ENCODE measurements at regions of chr9 and their contacts with region 1.

Region 1: GRCh38 chr9:98056269-98057137 is at the start of gene NANS:
- DNase-seq: peak; percentile 91 to 96
- H3K4me3 ChIP-seq: peak within 1 kb of the TSS; percentile 66
- H3K27ac ChIP-seq: peak within 1 kb of the TSS; percentile 67
- H3K4me1 ChIP-seq: peaks cover 21% of the 10 kb centered on the region
- H3K27me3 ChIP-seq: no peaks in the 10 kb centered on the region
- CTCF ChIP-seq: no peak
- total RNA-seq, gene NANS: 74.6 and 84.9 TPM in 2 replicates

Region 2: DNA sequence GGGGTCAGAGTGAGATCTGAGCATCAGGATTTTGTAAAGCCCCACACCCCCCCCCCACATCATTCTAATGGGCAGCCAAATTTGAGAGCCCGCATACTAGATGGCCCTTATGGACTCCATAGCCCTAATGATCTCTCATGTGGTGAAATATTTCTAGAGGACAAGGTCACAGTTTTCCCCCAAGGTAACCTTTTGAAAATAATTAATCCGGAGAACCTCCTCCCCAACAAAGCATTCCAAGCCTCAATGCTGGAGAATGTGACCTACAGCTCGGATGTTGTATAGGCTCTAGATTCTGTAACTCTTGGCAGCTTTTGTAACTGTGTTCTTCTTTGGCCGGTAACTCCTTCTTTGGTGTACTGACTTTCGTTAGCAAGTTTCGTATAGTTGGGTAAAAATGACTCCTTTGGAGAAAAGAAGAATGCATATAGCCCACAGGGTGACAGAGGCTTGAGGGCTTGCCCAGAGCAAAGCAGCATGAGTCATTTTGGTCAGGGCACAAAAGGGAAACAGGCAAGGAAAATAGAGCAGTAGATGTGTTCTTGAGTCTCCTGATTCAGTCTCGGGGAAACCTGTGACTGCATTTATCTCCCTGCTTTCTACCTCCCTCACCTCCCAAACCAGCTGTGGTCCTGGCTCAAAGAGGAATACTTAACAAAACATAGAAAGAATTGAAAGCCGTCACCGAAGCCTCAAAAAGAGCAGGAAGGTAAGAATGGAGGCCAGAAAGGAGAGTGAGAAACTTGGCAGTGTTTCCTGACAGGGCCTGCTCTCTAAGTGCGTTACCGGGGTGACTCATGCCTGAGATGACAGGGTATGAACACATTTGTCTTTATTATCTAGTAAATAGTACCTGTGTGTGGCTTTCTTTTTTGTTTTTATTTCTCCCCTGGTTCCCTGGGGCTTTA is 352.8 kb before region 1 on chr9:
- CTCF ChIA-PET with region 1: no interaction called
- POLR2A ChIA-PET with region 1: no interaction called
- intact Hi-C with region 1: loop called (anchors 10 kb)
- DNase-seq: peak; percentile 71 to 83
- H3K4me3 ChIP-seq: peak overlapping the region; percentile 46; the same call in 1 of the 2 replicates
- H3K27ac ChIP-seq: peak overlapping the region; percentile 91
- H3K4me1 ChIP-seq: peaks cover 38% of the 10 kb centered on the region
- H3K27me3 ChIP-seq: no peaks in the 10 kb centered on the region
- CTCF ChIP-seq: no peak

Region 3: GRCh38 chr9:97982683-97983588 is 73.6 kb before region 1 on chr9 and contains the start of gene ANP32B:
- CTCF ChIA-PET with region 1: interaction called, 3 read pairs
- POLR2A ChIA-PET with region 1: no interaction called
- intact Hi-C with region 1: loop called (anchors 5 kb)
- DNase-seq: peak; percentile 67 to 96
- H3K4me3 ChIP-seq: peak within 1 kb of the TSS; percentile 92
- H3K27ac ChIP-seq: peak within 1 kb of the TSS; percentile 93
- H3K4me1 ChIP-seq: peaks cover 37% of the 10 kb centered on the region
- H3K27me3 ChIP-seq: no peaks in the 10 kb centered on the region
- CTCF ChIP-seq: peak; percentile 56; the same call in 1 of the 2 replicates
- total RNA-seq, gene ANP32B: 280 and 284 TPM in 2 replicates

Region 4: GRCh38 chr9:98022447-98022846 is 34.1 kb before region 1 on chr9:
- CTCF ChIA-PET with region 1: interaction called, 10 read pairs
- POLR2A ChIA-PET with region 1: interaction called, 4 read pairs
- intact Hi-C with region 1: no loop called
- DNase-seq: no peak
- H3K4me3 ChIP-seq: no peak overlapping the region
- H3K27ac ChIP-seq: no peak overlapping the region
- H3K4me1 ChIP-seq: no peaks in the 10 kb centered on the region
- H3K27me3 ChIP-seq: no peaks in the 10 kb centered on the region
- CTCF ChIP-seq: no peak

Region 5: GRCh38 chr9:98034593-98035546 is 21.6 kb before region 1 on chr9:
- CTCF ChIA-PET with region 1: interaction called, 6 read pairs
- POLR2A ChIA-PET with region 1: interaction called, 11 read pairs
- intact Hi-C with region 1: no loop called
- DNase-seq: peak in 1 of 2 experiments; percentile 50
- H3K4me3 ChIP-seq: no peak overlapping the region
- H3K27ac ChIP-seq: peak overlapping the region; percentile 83
- H3K4me1 ChIP-seq: peaks cover 29% of the 10 kb centered on the region
- H3K27me3 ChIP-seq: no peaks in the 10 kb centered on the region
- CTCF ChIP-seq: peak; percentile 79

Region 6: GRCh38 chr9:98807070-98807810 is 750.7 kb after region 1 on chr9 and contains the start of gene GALNT12:
- CTCF ChIA-PET with region 1: no interaction called
- POLR2A ChIA-PET with region 1: no interaction called
- intact Hi-C with region 1: loop called (anchors 10 kb)
- DNase-seq: peak; percentile 40 to 56
- H3K4me3 ChIP-seq: peak within 1 kb of the TSS; percentile 87
- H3K27ac ChIP-seq: peak within 1 kb of the TSS; percentile 77
- H3K4me1 ChIP-seq: peaks cover 86% of the 10 kb centered on the region
- H3K27me3 ChIP-seq: no peaks in the 10 kb centered on the region
- CTCF ChIP-seq: no peak
- total RNA-seq, gene GALNT12: 50.3 and 52.9 TPM in 2 replicates

Measured in PC-9 (cell line).